Mammary epithelial cell (primary cell): ENCODE measurements at regions of chr9 and their contacts with region 1.

Region 1: DNA sequence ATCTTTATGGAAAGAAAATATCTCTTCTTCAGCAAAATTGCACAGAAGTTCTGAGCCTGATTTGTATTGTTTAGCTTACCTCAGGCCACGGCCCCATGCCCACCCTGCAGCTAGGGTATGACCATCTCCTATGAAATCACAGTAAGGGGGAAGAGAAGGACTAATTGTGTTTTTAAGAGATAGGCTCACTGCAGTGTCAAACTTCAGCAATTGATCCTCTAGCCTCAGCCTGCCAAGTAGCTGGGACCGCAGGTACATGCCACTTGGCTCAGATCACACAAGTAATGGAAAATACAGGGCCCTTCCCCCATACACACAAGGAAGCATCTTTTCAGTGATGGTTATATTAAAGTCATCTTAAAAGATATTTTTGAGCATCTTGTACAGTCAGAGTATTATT is 60.0 kb downstream of the DMAC1 start:
- DNase-seq: no peak
- H3K4me3 ChIP-seq: no peak overlapping the region
- H3K27ac ChIP-seq: no peak overlapping the region
- H3K4me1 ChIP-seq: no peaks in the 10 kb centered on the region
- H3K27me3 ChIP-seq: no peaks in the 10 kb centered on the region
- CTCF ChIP-seq: no peak

Region 2: DNA sequence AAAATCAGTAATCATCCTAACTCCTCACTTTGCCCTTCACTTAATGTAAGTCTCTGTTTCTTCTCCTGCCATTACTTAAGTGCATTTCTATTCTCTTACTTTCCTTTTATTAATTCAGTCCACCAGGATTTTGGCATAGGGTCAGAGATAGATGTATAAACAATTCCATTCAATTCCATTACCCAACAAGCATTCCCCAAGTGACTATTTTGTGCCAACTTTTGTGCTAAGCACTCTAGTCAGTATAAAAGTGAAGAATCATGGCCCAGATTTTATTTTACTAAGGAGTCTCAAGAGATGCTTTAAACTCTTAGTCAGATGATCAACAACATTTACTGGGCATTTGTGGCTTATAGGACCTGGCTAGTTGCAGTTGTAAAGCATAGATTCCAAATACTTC is 99.4 kb before region 1 on chr9:
- CTCF ChIA-PET with region 1: no interaction called
- dilution Hi-C with region 1: no loop called
- in situ Hi-C with region 1: loop called in 1 of 2 experiments (anchors 25 kb)
- intact Hi-C with region 1: no loop called
- DNase-seq: no peak
- H3K4me3 ChIP-seq: no peak overlapping the region
- H3K27ac ChIP-seq: no peak overlapping the region
- H3K4me1 ChIP-seq: no peaks in the 10 kb centered on the region
- H3K27me3 ChIP-seq: no peaks in the 10 kb centered on the region
- CTCF ChIP-seq: no peak

Region 3: GRCh38 chr9:7656636-7657035 is 83.0 kb before region 1 on chr9:
- CTCF ChIA-PET with region 1: no interaction called
- dilution Hi-C with region 1: no loop called
- in situ Hi-C with region 1: no loop called
- intact Hi-C with region 1: no loop called
- DNase-seq: peak; percentile 12
- H3K4me3 ChIP-seq: no peak overlapping the region
- H3K27ac ChIP-seq: no peak overlapping the region
- H3K4me1 ChIP-seq: no peaks in the 10 kb centered on the region
- H3K27me3 ChIP-seq: no peaks in the 10 kb centered on the region
- CTCF ChIP-seq: no peak

Region 4: GRCh38 chr9:7756088-7756487 is 16.5 kb after region 1 on chr9:
- CTCF ChIA-PET with region 1: no interaction called
- dilution Hi-C with region 1: no loop called
- in situ Hi-C with region 1: no loop called
- intact Hi-C with region 1: no loop called
- DNase-seq: peak; percentile 68
- H3K4me3 ChIP-seq: no peak overlapping the region
- H3K27ac ChIP-seq: no peak overlapping the region
- H3K4me1 ChIP-seq: peaks cover 9% of the 10 kb centered on the region
- H3K27me3 ChIP-seq: no peaks in the 10 kb centered on the region
- CTCF ChIP-seq: no peak